ENCODE measurements at regions of chr3 and their contacts with region 1.

Region 1: GRCh38 chr3:71725279-71725991 is at the start of gene EIF4E3:
- DNase-seq: peak in 5 of 9 donors; percentile 14 to 72 (median 33)
- ATAC-seq: peak; percentile 61
- H3K4me3 ChIP-seq: peak within 1 kb of the TSS; percentile 81
- H3K4me3 Mint-ChIP-seq: peak within 1 kb of the TSS; percentile 85 to 99 (median 95)
- H3K27ac ChIP-seq: peak within 1 kb of the TSS; percentile 76
- H3K27ac Mint-ChIP-seq: peak within 1 kb of the TSS; percentile 84 to 98 (median 96)
- H3K4me1 ChIP-seq: peaks cover 51 to 60% of the 10 kb centered on the region in 2 donors
- H3K4me1 Mint-ChIP-seq: peaks cover 60 to 81% (median 76%) of the 10 kb centered on the region in 7 donors
- H3K27me3 ChIP-seq: no peaks in the 10 kb centered on the region
- H3K27me3 Mint-ChIP-seq: no peaks in the 10 kb centered on the region
- total RNA-seq, gene EIF4E3: 28.5 to 72.8 (median 39.2) TPM

Region 2: GRCh38 chr3:71130471-71131374 is 594.7 kb before region 1 on chr3:
- CTCF ChIA-PET with region 1: no interaction called
- POLR2A ChIA-PET with region 1: no interaction called
- intact Hi-C with region 1: loop called (anchors 5 kb)
- DNase-seq: peak; percentile 33 to 90 (median 85)
- ATAC-seq: peak; percentile 86
- H3K4me3 ChIP-seq: peak overlapping the region; percentile 71
- H3K4me3 Mint-ChIP-seq: peak overlapping the region; percentile 85 to 99 (median 93)
- H3K27ac ChIP-seq: peak overlapping the region; percentile 89
- H3K27ac Mint-ChIP-seq: peak overlapping the region; percentile 94 to 99 (median 97)
- H3K4me1 ChIP-seq: peaks cover 42 to 51% of the 10 kb centered on the region in 2 donors
- H3K4me1 Mint-ChIP-seq: peaks cover 49 to 85% (median 80%) of the 10 kb centered on the region in 7 donors
- H3K27me3 ChIP-seq: no peaks in the 10 kb centered on the region
- H3K27me3 Mint-ChIP-seq: no peaks in the 10 kb centered on the region

Region 3: DNA sequence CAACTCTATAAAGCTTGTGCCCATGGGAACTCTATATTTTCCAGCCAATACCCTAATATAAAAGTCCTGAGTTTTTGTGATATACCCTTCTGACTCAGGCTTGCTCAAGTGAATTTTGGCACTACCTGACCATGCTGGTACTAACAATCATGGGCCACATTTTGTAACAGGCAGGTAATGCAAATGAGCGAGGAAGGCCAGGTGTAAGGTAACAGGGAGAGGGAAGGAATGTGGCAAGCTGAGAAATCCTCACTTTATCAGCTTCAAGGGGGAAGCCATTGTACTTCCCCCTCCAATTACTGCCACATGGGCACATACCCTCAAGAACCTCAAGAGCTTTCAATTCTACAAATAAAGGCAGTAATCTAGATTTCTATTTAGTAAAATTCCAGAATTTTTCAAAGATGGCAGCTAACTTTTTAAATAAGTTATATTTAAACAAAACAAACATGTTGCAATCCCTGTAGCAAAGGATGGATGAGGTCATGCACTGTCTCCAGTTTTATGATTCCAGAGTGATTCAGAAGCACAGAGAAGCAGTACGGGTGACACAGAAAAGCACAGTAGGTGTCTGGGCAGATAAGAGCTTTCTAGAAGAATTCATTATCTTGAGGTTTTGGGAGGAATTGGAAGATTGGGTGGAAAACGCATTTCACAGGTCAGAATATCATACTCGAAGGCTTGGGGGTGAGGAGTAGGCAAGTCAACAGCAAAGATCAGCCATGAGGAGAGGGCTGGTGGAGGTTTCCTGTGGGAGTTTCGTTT is 229.5 kb before region 1 on chr3:
- CTCF ChIA-PET with region 1: no interaction called
- POLR2A ChIA-PET with region 1: no interaction called
- intact Hi-C with region 1: loop called in 1 of 2 experiments (anchors 10 kb)
- DNase-seq: peak in 2 of 9 donors; percentile 24 to 34
- ATAC-seq: no peak
- H3K4me3 ChIP-seq: peak overlapping the region; percentile 33
- H3K4me3 Mint-ChIP-seq: peak overlapping the region; percentile 52 to 98 (median 80)
- H3K27ac ChIP-seq: peak overlapping the region; percentile 89
- H3K27ac Mint-ChIP-seq: peak overlapping the region; percentile 77 to 100 (median 98)
- H3K4me1 ChIP-seq: peaks cover 43 to 71% of the 10 kb centered on the region in 2 donors
- H3K4me1 Mint-ChIP-seq: peaks cover 54 to 90% (median 85%) of the 10 kb centered on the region in 7 donors
- H3K27me3 ChIP-seq: no peaks in the 10 kb centered on the region
- H3K27me3 Mint-ChIP-seq: no peaks in the 10 kb centered on the region

Region 4: GRCh38 chr3:71673486-71673885 is 51.9 kb before region 1 on chr3:
- CTCF ChIA-PET with region 1: no interaction called
- POLR2A ChIA-PET with region 1: no interaction called
- intact Hi-C with region 1: no loop called
- DNase-seq: no peak
- ATAC-seq: no peak
- H3K4me3 ChIP-seq: no peak overlapping the region
- H3K4me3 Mint-ChIP-seq: no peak overlapping the region
- H3K27ac ChIP-seq: no peak overlapping the region
- H3K27ac Mint-ChIP-seq: peak overlapping the region in 4 of 9 donors; percentile 25 to 34 (median 32)
- H3K4me1 ChIP-seq: no peaks in the 10 kb centered on the region
- H3K4me1 Mint-ChIP-seq: peaks cover 0 to 15% (median 2%) of the 10 kb centered on the region in 7 donors
- H3K27me3 ChIP-seq: no peaks in the 10 kb centered on the region
- H3K27me3 Mint-ChIP-seq: no peaks in the 10 kb centered on the region

Region 5: DNA sequence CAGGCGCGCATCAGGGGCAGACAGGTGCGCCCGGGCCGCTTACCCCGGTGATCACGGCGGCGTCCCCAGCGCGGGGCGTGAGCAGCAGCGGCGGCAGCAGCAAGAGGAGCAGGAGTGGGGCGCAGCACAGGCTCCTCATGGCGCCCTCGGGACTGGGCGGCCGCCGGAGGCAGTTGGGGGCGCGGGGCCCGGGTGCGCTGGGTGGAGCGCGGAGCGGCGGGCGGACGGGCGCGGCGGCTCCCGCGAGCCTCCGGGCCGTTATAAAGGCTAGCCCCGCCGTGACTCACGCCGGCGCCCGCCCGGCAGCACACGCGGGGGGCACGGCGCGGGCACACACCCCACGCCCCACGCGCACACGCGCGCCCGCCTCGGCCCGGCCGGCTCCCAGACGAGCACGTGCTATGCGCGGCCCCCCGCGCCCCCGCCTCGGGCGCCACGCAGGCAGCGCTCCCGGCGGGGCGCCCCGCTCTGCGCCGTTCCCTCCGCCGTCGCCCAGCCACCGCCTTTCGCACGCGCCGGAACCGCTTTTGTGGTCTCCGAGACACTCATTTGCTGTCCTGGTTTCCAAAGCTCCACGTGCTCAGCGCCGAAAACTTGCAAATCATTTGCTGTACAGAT is 59.6 kb after region 1 on chr3 and contains the start of gene PROK2:
- CTCF ChIA-PET with region 1: interaction called, 3 read pairs
- POLR2A ChIA-PET with region 1: no interaction called
- intact Hi-C with region 1: loop called in 1 of 2 experiments (anchors 5 kb)
- DNase-seq: peak in 6 of 9 donors; percentile 11 to 38 (median 16)
- ATAC-seq: peak; percentile 77
- H3K4me3 ChIP-seq: peak within 1 kb of the TSS; percentile 13
- H3K4me3 Mint-ChIP-seq: peak within 1 kb of the TSS; percentile 75 to 89 (median 82)
- H3K27ac ChIP-seq: no peak within 1 kb of the TSS
- H3K27ac Mint-ChIP-seq: peak within 1 kb of the TSS in 1 of 9 donors; percentile 31
- H3K4me1 ChIP-seq: peaks cover 0 to 8% of the 10 kb centered on the region in 2 donors
- H3K4me1 Mint-ChIP-seq: peaks cover 16 to 22% (median 20%) of the 10 kb centered on the region in 7 donors
- H3K27me3 ChIP-seq: peaks cover 21 to 33% of the 10 kb centered on the region in 2 donors
- H3K27me3 Mint-ChIP-seq: peaks cover 51 to 78% (median 62%) of the 10 kb centered on the region in 5 donors
- total RNA-seq, gene PROK2: 14.1 TPM in 1 of 5 experiments, not detected in the others

Region 6: GRCh38 chr3:72100601-72101187 is 375.3 kb after region 1 on chr3:
- CTCF ChIA-PET with region 1: no interaction called
- POLR2A ChIA-PET with region 1: no interaction called
- intact Hi-C with region 1: loop called in 1 of 2 experiments (anchors 2 kb)
- DNase-seq: peak; percentile 83 to 94 (median 90)
- ATAC-seq: peak; percentile 89
- H3K4me3 ChIP-seq: peak overlapping the region; percentile 56
- H3K4me3 Mint-ChIP-seq: peak overlapping the region; percentile 77 to 88 (median 83)
- H3K27ac ChIP-seq: peak overlapping the region; percentile 37
- H3K27ac Mint-ChIP-seq: peak overlapping the region; percentile 28 to 96 (median 83)
- H3K4me1 ChIP-seq: peaks cover 3 to 19% of the 10 kb centered on the region in 2 donors
- H3K4me1 Mint-ChIP-seq: peaks cover 24 to 38% (median 26%) of the 10 kb centered on the region in 7 donors
- H3K27me3 ChIP-seq: peaks cover 0 to 3% of the 10 kb centered on the region in 2 donors
- H3K27me3 Mint-ChIP-seq: peaks cover 0 to 7% (median 0%) of the 10 kb centered on the region in 5 donors

Region 7: DNA sequence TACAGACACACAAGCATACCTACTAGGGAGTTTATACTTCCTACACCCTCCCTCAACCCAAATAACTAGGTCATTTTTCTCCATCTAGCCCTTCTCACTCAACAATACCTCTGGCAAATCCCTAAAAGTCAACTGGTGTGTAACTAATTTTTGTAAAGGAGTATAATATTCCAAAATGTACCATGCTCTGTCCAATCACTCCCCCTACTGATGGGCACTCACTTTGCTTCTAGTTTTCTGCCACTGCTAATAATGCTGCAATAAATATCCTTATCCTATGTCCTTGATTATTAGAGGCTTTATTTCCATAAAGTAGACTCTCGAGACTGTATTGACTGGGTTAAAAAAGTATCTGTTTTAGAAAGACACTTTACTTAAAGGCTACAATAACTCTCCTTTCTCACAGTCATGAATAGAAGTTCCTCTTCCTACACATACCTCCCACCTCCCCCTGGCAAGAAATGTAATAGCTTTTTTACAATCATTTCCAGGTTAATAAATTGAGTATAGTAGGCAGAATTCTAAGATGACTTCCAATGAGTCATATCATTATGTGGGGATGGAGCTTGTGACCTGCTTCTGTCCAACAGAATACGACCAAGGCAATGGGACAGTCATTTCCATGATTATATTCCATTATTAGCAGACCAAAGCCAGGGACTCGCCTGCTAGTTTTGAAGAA is 1092.8 kb after region 1 on chr3:
- CTCF ChIA-PET with region 1: interaction called, 7 read pairs
- POLR2A ChIA-PET with region 1: no interaction called
- intact Hi-C with region 1: loop called (anchors 1 kb)
- DNase-seq: peak in 1 of 9 donors; percentile 4
- ATAC-seq: no peak
- H3K4me3 ChIP-seq: no peak overlapping the region
- H3K4me3 Mint-ChIP-seq: no peak overlapping the region
- H3K27ac ChIP-seq: no peak overlapping the region
- H3K27ac Mint-ChIP-seq: peak overlapping the region in 2 of 9 donors; percentile 14 to 56
- H3K4me1 ChIP-seq: peaks cover 0 to 25% of the 10 kb centered on the region in 2 donors
- H3K4me1 Mint-ChIP-seq: peaks cover 0 to 14% (median 8%) of the 10 kb centered on the region in 7 donors
- H3K27me3 ChIP-seq: no peaks in the 10 kb centered on the region
- H3K27me3 Mint-ChIP-seq: no peaks in the 10 kb centered on the region